GM12878 (cell line): ENCODE measurements at regions of chr13 and their contacts with region 1.

Region 1: GRCh38 chr13:77374786-77375185 is 47.9 kb upstream of the MYCBP2 start:
- DNase-seq: no peak
- ATAC-seq: peak; percentile 83
- H3K4me3 ChIP-seq: no peak overlapping the region
- H3K27ac ChIP-seq: no peak overlapping the region
- H3K4me1 ChIP-seq: no peaks in the 10 kb centered on the region
- H3K27me3 ChIP-seq: no peaks in the 10 kb centered on the region
- CTCF ChIP-seq: no peak
- EP300 ChIP-seq: no peak
- POLR2A ChIP-seq: no peak
- RAD21 ChIP-seq: no peak

Region 2: DNA sequence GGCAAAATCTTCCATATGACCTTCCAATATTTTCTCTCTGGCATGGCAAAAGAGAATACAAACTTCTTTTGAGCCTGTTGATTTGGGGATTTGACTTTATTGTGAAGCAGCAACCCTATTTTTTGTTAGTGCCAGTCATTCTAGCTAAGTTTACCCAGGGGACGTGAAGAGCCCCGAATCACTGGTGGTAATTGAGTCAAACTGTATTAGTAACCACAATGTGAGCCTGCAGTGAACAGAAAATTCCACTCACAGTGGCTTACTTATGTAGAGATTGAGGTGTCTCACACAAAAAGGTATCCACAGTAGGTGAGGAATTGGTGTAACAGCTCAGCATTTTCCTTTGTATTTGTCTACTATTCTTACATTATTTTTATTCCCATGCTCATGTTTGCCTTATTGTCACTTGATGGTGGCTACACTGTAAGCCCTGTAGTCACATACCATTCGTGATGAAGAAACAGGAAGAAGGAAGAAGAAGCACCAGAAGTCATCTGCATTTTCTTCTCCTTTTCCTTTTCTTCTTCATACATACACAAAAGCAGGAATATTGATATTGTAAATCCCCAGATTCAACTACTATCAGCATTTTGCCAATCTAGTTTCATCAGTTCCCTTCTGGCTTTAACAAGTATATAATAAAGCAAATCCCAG is 14.6 kb before region 1 on chr13:
- CTCF ChIA-PET with region 1: interaction called, 5 read pairs
- POLR2A ChIA-PET with region 1: interaction called, 4 read pairs
- RAD21 ChIA-PET with region 1: interaction called, 4 read pairs
- SMC1A ChIA-PET with region 1: interaction called, 16 read pairs
- in situ Hi-C with region 1: no loop called
- intact Hi-C with region 1: no loop called
- DNase-seq: no peak
- ATAC-seq: peak; percentile 88
- H3K4me3 ChIP-seq: no peak overlapping the region
- H3K27ac ChIP-seq: no peak overlapping the region
- H3K4me1 ChIP-seq: no peaks in the 10 kb centered on the region
- H3K27me3 ChIP-seq: no peaks in the 10 kb centered on the region
- CTCF ChIP-seq: no peak
- EP300 ChIP-seq: no peak
- POLR2A ChIP-seq: no peak
- RAD21 ChIP-seq: no peak

Region 3: DNA sequence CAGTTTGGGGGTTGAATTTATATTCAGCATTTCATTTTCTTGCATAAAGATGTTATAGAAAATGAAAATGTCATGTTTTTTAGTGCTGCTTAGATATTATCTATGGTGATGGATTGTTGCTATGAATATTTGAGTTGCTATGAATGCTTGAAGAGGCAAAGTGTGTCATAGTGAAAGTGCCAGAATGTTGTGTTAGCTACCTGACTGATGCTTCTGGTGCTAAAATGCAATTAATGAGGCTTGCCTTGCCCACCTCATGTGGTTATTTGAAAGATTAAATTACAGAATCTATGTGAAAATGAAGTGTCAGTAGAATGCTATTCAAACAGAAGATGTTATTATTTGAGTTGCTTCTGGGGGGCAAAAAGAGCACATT is 14.8 kb after region 1 on chr13:
- CTCF ChIA-PET with region 1: interaction called, 3 read pairs
- POLR2A ChIA-PET with region 1: interaction called, 4 read pairs
- RAD21 ChIA-PET with region 1: interaction called, 3 read pairs
- SMC1A ChIA-PET with region 1: interaction called, 38 read pairs
- in situ Hi-C with region 1: no loop called
- intact Hi-C with region 1: no loop called
- DNase-seq: peak; percentile 23
- ATAC-seq: peak; percentile 89
- H3K4me3 ChIP-seq: no peak overlapping the region
- H3K27ac ChIP-seq: no peak overlapping the region
- H3K4me1 ChIP-seq: peaks cover 9% of the 10 kb centered on the region; the same call in 1 of the 2 replicates
- H3K27me3 ChIP-seq: no peaks in the 10 kb centered on the region
- CTCF ChIP-seq: no peak
- EP300 ChIP-seq: peak; percentile 55 to 87; a peak in 3 of 4 replicates
- POLR2A ChIP-seq: no peak
- RAD21 ChIP-seq: no peak